ENCODE measurements at regions of chr10 and their contacts with region 1.

Region 1: GRCh38 chr10:3701491-3701890 is 83.5 kb downstream of the KLF6 start:
- DNase-seq: no peak
- ATAC-seq: no peak
- H3K4me3 Mint-ChIP-seq: no peak overlapping the region
- H3K27ac Mint-ChIP-seq: no peak overlapping the region
- H3K4me1 Mint-ChIP-seq: peaks cover 0 to 2% (median under 1%) of the 10 kb centered on the region in 4 donors
- H3K27me3 Mint-ChIP-seq: peaks cover 0 to 10% (median 2%) of the 10 kb centered on the region in 5 donors

Region 2: DNA sequence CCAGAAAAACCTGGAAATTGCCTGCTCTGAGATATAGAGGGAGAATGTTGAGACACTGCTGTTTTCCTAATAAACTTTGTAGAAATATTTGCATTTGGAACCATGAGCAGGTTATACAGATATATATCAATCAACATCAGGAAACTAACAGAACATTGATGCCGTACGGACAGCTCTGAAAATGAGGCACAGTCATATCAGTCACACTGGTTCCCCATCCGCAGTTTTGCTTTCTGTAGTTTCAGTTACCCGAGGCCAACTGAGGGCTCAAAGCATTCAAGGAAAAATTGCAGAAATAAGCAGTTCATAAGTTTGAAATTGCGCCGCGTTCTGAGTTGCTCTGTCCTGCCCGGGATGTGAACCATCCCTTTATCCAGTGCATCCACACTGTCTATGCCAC is 54.4 kb before region 1 on chr10:
- POLR2A ChIA-PET with region 1: interaction called, 10 read pairs
- DNase-seq: no peak
- ATAC-seq: no peak
- H3K4me3 Mint-ChIP-seq: no peak overlapping the region
- H3K27ac Mint-ChIP-seq: no peak overlapping the region
- H3K4me1 Mint-ChIP-seq: peaks cover 0 to 3% (median 0%) of the 10 kb centered on the region in 4 donors
- H3K27me3 Mint-ChIP-seq: peaks cover 4 to 20% (median 9%) of the 10 kb centered on the region in 5 donors